PC-3 (cell line): ENCODE measurements at regions of chr16 and their contacts with region 1.

Region 1: DNA sequence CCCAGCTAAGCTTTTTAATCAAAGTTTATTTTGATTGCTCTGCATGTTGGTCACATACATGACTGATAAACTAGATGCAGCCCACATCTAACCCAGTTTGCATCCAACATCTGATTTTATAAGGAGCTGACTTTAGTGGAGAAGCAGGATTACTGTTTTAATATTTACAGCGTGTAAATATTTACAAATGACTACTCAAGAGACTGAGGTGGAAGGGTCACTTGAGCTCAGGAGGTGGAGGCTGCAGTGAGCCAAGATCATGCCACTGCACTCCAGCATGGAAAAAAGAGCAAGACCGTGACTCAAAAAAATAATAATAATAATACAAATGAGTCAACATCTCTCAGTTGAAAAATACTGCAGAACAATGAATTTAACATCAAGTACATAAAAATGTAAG is 50.8 kb downstream of the PARN start:
- DNase-seq: peak; percentile 39
- ATAC-seq: peak; percentile 95
- H3K4me3 ChIP-seq: no peak overlapping the region
- H3K27ac ChIP-seq: peak overlapping the region; percentile 39
- H3K4me1 ChIP-seq: peaks cover 5% of the 10 kb centered on the region; the same call in 1 of the 2 replicates
- H3K27me3 ChIP-seq: no peaks in the 10 kb centered on the region
- CTCF ChIP-seq: no peak

Region 2: DNA sequence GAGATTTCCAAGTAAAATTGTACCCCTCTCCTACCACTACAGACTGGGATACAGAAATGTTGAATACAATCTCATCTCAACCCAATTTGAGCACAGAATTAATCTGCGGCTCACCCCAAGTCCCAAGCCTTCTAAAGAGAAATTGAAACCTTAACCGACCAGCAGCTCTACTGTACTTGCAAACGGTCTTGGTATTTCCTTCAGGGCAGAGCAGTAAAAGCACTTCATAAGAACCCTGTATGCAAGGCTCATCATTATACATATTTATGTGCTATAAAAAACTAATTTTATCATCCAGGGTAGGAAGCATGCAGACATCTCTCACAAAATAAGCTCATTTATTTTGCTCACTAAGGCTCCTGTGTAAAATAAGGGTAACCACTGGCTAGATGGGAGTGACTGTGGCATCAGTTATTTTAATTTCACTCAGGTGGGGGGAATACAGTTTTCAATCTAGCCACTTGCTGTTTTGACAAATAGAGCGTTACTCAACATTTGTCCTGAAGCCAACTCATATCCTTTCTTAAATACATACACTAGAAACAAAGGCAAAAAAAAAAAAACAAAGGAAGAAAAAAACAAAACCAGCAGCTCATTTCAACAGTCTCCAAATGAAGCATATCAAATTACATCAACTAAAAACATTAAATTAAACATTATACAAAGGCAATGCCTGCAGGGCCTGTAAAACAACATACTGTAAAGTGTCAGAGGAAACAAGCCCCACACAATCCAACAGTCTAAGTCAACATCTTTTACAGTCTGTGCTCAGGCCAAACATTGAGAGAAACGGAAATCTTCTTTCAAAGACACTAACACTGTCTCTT is 14.2 kb before region 1 on chr16:
- CTCF ChIA-PET with region 1: no interaction called
- POLR2A ChIA-PET with region 1: interaction called, 3 read pairs
- intact Hi-C with region 1: loop called (anchors 2 kb)
- DNase-seq: peak; percentile 65
- ATAC-seq: peak; percentile 88
- H3K4me3 ChIP-seq: peak overlapping the region; percentile 35; the same call in 1 of the 2 replicates
- H3K27ac ChIP-seq: peak overlapping the region; percentile 51
- H3K4me1 ChIP-seq: peaks cover 28% of the 10 kb centered on the region
- H3K27me3 ChIP-seq: no peaks in the 10 kb centered on the region
- CTCF ChIP-seq: no peak

Region 3: DNA sequence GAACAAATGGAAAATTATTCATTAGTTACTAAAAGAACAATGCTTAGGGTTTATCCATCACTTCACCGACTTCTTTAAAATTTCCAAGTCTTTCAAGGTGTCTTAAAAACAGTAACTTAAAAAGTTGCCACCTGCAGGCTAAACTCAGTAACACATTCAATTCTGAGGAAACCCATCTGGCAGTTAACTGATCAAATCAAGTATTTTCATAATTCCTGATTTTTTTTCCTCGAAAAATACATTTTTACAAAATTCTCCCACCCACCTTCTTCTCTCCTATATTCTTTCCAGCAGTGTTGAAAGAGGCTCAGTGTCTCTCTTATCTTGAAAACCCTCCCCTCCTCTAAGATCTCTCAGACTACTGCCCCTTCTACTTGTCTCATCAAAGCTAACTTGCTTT is 20.9 kb after region 1 on chr16:
- CTCF ChIA-PET with region 1: no interaction called
- POLR2A ChIA-PET with region 1: no interaction called
- intact Hi-C with region 1: no loop called
- DNase-seq: peak; percentile 47
- ATAC-seq: no peak
- H3K4me3 ChIP-seq: no peak overlapping the region
- H3K27ac ChIP-seq: no peak overlapping the region
- H3K4me1 ChIP-seq: no peaks in the 10 kb centered on the region
- H3K27me3 ChIP-seq: no peaks in the 10 kb centered on the region
- CTCF ChIP-seq: peak; percentile 59